Activated naive CD4-positive, alpha-beta T cell treated with anti-CD3 and anti-CD28 coated beads for 36 hours (primary cell): ENCODE measurements at regions of chr20 and their contacts with region 1.

Region 1: GRCh38 chr20:10501402-10501801 is 66.3 kb downstream of the SLX4IP start:
- DNase-seq: peak; percentile 17
- H3K4me3 Mint-ChIP-seq: peak overlapping the region; percentile 73
- H3K27ac Mint-ChIP-seq: peak overlapping the region; percentile 71
- H3K4me1 Mint-ChIP-seq: peaks cover 19% of the 10 kb centered on the region
- H3K27me3 Mint-ChIP-seq: no peaks in the 10 kb centered on the region

Region 2: GRCh38 chr20:10388597-10388996 is 112.8 kb before region 1 on chr20:
- CTCF ChIA-PET with region 1: no interaction called
- intact Hi-C with region 1: no loop called
- DNase-seq: no peak
- H3K4me3 Mint-ChIP-seq: no peak overlapping the region
- H3K27ac Mint-ChIP-seq: no peak overlapping the region
- H3K4me1 Mint-ChIP-seq: no peaks in the 10 kb centered on the region
- H3K27me3 Mint-ChIP-seq: peaks cover 3% of the 10 kb centered on the region

Region 3: GRCh38 chr20:10412591-10413408 is 88.6 kb before region 1 on chr20:
- CTCF ChIA-PET with region 1: no interaction called
- intact Hi-C with region 1: no loop called
- DNase-seq: no peak
- H3K4me3 Mint-ChIP-seq: no peak overlapping the region
- H3K27ac Mint-ChIP-seq: no peak overlapping the region
- H3K4me1 Mint-ChIP-seq: peaks cover 4% of the 10 kb centered on the region
- H3K27me3 Mint-ChIP-seq: no peaks in the 10 kb centered on the region

Region 4: DNA sequence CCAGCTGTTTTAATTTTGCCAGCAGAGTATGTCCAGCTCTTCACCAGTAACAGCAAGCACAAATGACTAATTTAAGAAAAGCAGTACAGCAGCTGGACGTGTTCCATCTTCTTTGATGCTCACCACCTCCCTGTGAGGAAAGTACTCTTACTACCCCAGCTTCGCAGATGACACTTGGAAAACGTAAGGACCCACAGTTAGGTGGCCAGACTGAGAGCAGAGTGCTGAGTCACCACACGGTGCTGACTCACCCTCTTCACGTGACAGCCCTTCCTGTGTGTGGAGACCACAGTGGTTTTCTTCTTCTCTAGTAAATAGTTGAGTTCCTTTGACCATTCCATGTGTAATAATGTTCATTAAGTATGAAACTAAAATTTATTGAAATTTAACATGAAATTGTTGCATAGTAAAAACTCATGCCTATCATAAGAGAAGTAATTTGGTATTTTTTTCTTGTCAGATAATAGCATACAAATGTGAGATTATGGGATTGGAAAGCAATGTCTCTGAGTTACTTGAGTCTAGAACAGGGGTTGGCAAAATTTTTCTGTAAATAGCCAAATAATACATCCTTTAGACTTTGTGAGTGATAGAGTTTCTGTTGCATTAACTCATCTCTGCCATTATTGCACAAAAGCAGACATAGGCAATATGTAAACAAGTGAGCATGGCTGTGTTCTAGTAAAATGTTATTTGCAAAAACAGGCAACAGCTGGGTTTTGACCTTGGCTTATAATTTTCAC is 10.3 kb after region 1 on chr20:
- CTCF ChIA-PET with region 1: no interaction called
- intact Hi-C with region 1: loop called (anchors 1 kb)
- DNase-seq: peak; percentile 77
- H3K4me3 Mint-ChIP-seq: no peak overlapping the region
- H3K27ac Mint-ChIP-seq: peak overlapping the region; percentile 56
- H3K4me1 Mint-ChIP-seq: peaks cover 25% of the 10 kb centered on the region
- H3K27me3 Mint-ChIP-seq: no peaks in the 10 kb centered on the region

Region 5: GRCh38 chr20:11047559-11047958 is 546.2 kb after region 1 on chr20:
- CTCF ChIA-PET with region 1: no interaction called
- intact Hi-C with region 1: no loop called
- DNase-seq: no peak
- H3K4me3 Mint-ChIP-seq: no peak overlapping the region
- H3K27ac Mint-ChIP-seq: no peak overlapping the region
- H3K4me1 Mint-ChIP-seq: no peaks in the 10 kb centered on the region
- H3K27me3 Mint-ChIP-seq: no peaks in the 10 kb centered on the region